Naive thymus-derived CD4-positive, alpha-beta T cell (primary cell): ENCODE measurements at regions of chr6 and their contacts with region 1.

Region 1: GRCh38 chr6:43247113-43247999 is 4.1 kb downstream of the TTBK1 start:
- DNase-seq: peak; percentile 65 to 81 (median 78)
- ATAC-seq: peak; percentile 95
- H3K4me3 ChIP-seq: peak overlapping the region; percentile 84
- H3K4me3 Mint-ChIP-seq: peak overlapping the region in 9 of 10 donors; percentile 83 to 94 (median 88)
- H3K27ac ChIP-seq: peak overlapping the region; percentile 78
- H3K27ac Mint-ChIP-seq: peak overlapping the region; percentile 76 to 92 (median 89)
- H3K4me1 ChIP-seq: peaks cover 3 to 13% of the 10 kb centered on the region in 2 donors
- H3K4me1 Mint-ChIP-seq: peaks cover 11 to 26% (median 21%) of the 10 kb centered on the region in 7 donors
- H3K27me3 ChIP-seq: peaks cover 3 to 13% of the 10 kb centered on the region in 2 donors
- H3K27me3 Mint-ChIP-seq: peaks cover 7 to 33% (median 14%) of the 10 kb centered on the region in 5 donors

Region 2: DNA sequence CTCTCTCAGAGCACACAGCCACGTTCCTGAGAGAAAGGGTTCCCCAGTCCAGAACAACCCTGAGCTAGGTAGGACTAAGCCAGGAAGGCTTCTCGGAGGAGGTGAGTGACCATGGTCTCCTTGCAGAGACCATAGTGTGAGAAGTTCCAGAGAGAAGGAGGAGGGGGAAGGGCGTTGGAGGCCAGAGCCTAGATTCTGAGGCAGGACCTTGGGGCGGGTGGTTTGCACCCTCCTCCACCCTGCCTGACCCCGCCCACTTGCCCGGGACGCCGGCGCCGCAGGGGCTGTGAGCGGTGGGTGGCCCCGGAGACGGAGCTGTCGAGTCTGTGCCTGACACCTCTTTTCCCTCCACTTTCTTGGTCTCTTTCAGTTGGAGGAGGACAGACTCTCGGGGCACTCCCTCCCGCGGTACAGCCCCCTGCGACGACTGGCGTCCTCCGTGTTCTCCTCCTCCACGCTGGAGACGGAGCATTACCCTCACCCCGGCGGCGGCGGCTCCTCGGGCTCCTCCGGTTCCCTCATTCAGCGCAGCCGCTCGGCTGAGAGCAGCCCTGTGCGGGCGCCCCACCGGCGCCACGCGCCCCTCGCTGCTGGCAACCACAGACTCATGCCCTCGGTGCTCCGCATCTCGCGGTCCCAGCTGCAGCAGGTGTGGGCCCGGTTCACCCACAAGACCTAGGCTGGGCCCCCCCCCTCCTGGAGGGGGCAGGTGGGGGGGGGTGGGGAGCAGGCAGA is 22.1 kb after region 1 on chr6:
- CTCF ChIA-PET with region 1: no interaction called
- POLR2A ChIA-PET with region 1: no interaction called
- intact Hi-C with region 1: loop called in 1 of 2 experiments (anchors 1 kb)
- DNase-seq: peak; percentile 14 to 62 (median 39)
- ATAC-seq: peak; percentile 70
- H3K4me3 ChIP-seq: peak overlapping the region; percentile 50
- H3K4me3 Mint-ChIP-seq: peak overlapping the region; percentile 60 to 84 (median 78)
- H3K27ac ChIP-seq: no peak overlapping the region
- H3K27ac Mint-ChIP-seq: peak overlapping the region in 3 of 9 donors; percentile 21 to 41 (median 40)
- H3K4me1 ChIP-seq: no peaks in the 10 kb centered on the region
- H3K4me1 Mint-ChIP-seq: peaks cover 0 to 19% (median 6%) of the 10 kb centered on the region in 7 donors
- H3K27me3 ChIP-seq: no peaks in the 10 kb centered on the region
- H3K27me3 Mint-ChIP-seq: peaks cover 0 to 62% (median 4%) of the 10 kb centered on the region in 5 donors